CD4-positive, alpha-beta memory T cell (primary cell): ENCODE measurements at regions of chr4 and their contacts with region 1.

Region 1: DNA sequence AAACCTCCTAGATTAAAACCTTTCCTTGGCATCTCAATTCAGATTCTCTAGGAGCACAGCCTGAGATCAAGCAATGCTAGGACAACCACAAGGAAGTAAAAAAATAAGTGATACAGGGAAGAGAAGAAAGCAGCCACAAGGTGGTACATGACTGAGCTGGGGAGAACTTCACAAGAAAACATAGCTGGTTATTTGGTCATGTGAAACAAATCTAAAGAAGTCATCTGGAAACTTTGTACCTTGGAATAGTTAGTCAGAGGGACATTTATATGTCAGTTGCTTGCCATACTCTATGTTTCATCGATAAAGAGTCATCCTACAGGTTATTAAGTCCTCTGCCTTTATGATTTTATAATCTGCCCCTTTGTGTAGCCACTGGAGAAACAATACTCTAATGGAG is 575.0 kb downstream of the IL15 start:
- DNase-seq: no peak
- H3K4me3 ChIP-seq: no peak overlapping the region
- H3K4me3 Mint-ChIP-seq: no peak overlapping the region
- H3K27ac ChIP-seq: no peak overlapping the region
- H3K27ac Mint-ChIP-seq: peak overlapping the region in 5 of 7 donors; percentile 15 to 53 (median 42)
- H3K4me1 ChIP-seq: no peaks in the 10 kb centered on the region
- H3K4me1 Mint-ChIP-seq: peaks cover 33 to 50% (median 41%) of the 10 kb centered on the region in 4 donors
- H3K27me3 ChIP-seq: no peaks in the 10 kb centered on the region
- H3K27me3 Mint-ChIP-seq: no peaks in the 10 kb centered on the region

Region 2: DNA sequence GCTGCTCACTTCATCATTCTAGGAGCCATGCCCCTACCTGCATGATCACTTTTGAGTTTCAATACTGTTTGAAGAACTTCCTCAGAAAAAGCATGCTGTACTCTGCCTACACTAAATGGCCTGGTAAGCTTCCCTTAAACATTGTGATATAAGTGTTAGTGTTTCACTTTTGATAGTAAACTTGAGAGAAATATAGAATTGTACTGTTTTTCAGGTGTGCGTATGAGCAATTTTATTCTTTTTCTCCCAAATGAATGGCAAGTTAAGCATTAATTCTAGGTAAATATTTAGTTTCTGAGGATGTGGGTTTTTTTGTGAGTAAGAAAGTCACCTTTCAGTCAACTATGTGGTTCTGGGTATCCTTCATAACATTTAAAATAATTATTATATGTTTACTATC is 90.5 kb before region 1 on chr4:
- CTCF ChIA-PET with region 1: no interaction called
- POLR2A ChIA-PET with region 1: no interaction called
- intact Hi-C with region 1: no loop called
- DNase-seq: no peak
- H3K4me3 ChIP-seq: no peak overlapping the region
- H3K4me3 Mint-ChIP-seq: no peak overlapping the region
- H3K27ac ChIP-seq: no peak overlapping the region
- H3K27ac Mint-ChIP-seq: peak overlapping the region in 1 of 7 donors; percentile 46
- H3K4me1 ChIP-seq: no peaks in the 10 kb centered on the region
- H3K4me1 Mint-ChIP-seq: peaks cover 15 to 30% (median 19%) of the 10 kb centered on the region in 4 donors
- H3K27me3 ChIP-seq: no peaks in the 10 kb centered on the region
- H3K27me3 Mint-ChIP-seq: no peaks in the 10 kb centered on the region

Region 3: DNA sequence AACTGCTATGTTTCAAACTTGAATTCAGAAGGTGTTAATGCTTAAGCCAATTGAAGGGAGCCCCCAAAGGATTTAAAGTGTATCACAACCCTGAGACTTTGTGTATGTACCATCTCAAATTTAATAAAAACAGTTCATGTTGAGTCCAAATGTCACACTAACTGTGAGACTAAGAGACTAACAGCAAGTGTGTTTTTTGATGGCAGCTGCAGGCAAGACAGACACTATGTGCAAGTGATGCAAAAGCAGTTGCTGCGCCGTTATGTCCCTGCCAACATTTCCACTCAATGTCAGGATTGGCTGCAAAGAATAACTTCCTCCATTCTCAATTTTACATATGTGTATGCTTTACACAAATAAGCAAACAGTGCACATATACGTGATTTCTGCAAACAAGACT is 19.6 kb after region 1 on chr4:
- CTCF ChIA-PET with region 1: interaction called, 3 read pairs
- POLR2A ChIA-PET with region 1: no interaction called
- intact Hi-C with region 1: loop called (anchors 2 kb)
- DNase-seq: no peak
- H3K4me3 ChIP-seq: no peak overlapping the region
- H3K4me3 Mint-ChIP-seq: no peak overlapping the region
- H3K27ac ChIP-seq: no peak overlapping the region
- H3K27ac Mint-ChIP-seq: peak overlapping the region in 1 of 7 donors; percentile 23
- H3K4me1 ChIP-seq: peaks cover 6% of the 10 kb centered on the region
- H3K4me1 Mint-ChIP-seq: peaks cover 30 to 55% (median 42%) of the 10 kb centered on the region in 4 donors
- H3K27me3 ChIP-seq: no peaks in the 10 kb centered on the region
- H3K27me3 Mint-ChIP-seq: no peaks in the 10 kb centered on the region

Region 4: DNA sequence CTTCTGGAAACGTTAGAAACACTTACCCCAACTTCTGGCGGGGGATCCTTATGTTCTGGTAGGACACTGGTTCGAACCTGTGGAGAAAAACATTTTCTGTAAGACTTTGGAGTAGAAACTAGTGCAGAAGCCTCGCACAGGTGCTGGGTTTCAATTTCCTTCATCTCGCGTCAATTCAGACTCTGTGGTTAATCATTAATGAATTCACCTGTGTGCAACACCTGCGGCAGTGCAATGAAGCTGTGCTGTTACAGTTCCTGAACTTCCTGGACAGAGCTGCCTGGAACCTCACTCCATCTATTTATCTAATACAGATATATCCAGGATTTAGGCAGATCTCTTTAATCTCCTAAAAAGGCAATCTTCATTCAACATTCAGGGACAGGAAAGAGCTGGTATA is 103.3 kb after region 1 on chr4:
- CTCF ChIA-PET with region 1: no interaction called
- POLR2A ChIA-PET with region 1: no interaction called
- intact Hi-C with region 1: no loop called
- DNase-seq: peak in 2 of 5 donors; percentile 11 to 37
- H3K4me3 ChIP-seq: no peak overlapping the region
- H3K4me3 Mint-ChIP-seq: peak overlapping the region; percentile 27 to 83 (median 72)
- H3K27ac ChIP-seq: peak overlapping the region; percentile 7
- H3K27ac Mint-ChIP-seq: peak overlapping the region; percentile 59 to 91 (median 81)
- H3K4me1 ChIP-seq: peaks cover 71% of the 10 kb centered on the region
- H3K4me1 Mint-ChIP-seq: peaks cover 63 to 94% (median 78%) of the 10 kb centered on the region in 4 donors
- H3K27me3 ChIP-seq: no peaks in the 10 kb centered on the region
- H3K27me3 Mint-ChIP-seq: no peaks in the 10 kb centered on the region